OCI-LY7 (cell line): ENCODE measurements at regions of chr5 and their contacts with region 1.

Region 1: GRCh38 chr5:148730943-148731861 is 76.9 kb upstream of the HTR4 start:
- DNase-seq: peak; percentile 88
- H3K4me3 ChIP-seq: peak overlapping the region; percentile 28
- H3K27ac ChIP-seq: no peak overlapping the region
- H3K4me1 ChIP-seq: no peaks in the 10 kb centered on the region
- CTCF ChIP-seq: peak; percentile 100

Region 2: GRCh38 chr5:147949711-147950573 is 781.3 kb before region 1 on chr5:
- CTCF ChIA-PET with region 1: no interaction called
- POLR2A ChIA-PET with region 1: no interaction called
- intact Hi-C with region 1: loop called (anchors 2 kb)
- DNase-seq: peak; percentile 51
- H3K4me3 ChIP-seq: no peak overlapping the region
- H3K27ac ChIP-seq: no peak overlapping the region
- H3K4me1 ChIP-seq: no peaks in the 10 kb centered on the region
- CTCF ChIP-seq: peak; percentile 89

Region 3: GRCh38 chr5:148443998-148444397 is 287.2 kb before region 1 on chr5:
- CTCF ChIA-PET with region 1: no interaction called
- POLR2A ChIA-PET with region 1: no interaction called
- intact Hi-C with region 1: loop called (anchors 2 kb)
- DNase-seq: peak; percentile 63
- H3K4me3 ChIP-seq: no peak overlapping the region
- H3K27ac ChIP-seq: no peak overlapping the region
- H3K4me1 ChIP-seq: no peaks in the 10 kb centered on the region
- CTCF ChIP-seq: peak; percentile 91

Region 4: DNA sequence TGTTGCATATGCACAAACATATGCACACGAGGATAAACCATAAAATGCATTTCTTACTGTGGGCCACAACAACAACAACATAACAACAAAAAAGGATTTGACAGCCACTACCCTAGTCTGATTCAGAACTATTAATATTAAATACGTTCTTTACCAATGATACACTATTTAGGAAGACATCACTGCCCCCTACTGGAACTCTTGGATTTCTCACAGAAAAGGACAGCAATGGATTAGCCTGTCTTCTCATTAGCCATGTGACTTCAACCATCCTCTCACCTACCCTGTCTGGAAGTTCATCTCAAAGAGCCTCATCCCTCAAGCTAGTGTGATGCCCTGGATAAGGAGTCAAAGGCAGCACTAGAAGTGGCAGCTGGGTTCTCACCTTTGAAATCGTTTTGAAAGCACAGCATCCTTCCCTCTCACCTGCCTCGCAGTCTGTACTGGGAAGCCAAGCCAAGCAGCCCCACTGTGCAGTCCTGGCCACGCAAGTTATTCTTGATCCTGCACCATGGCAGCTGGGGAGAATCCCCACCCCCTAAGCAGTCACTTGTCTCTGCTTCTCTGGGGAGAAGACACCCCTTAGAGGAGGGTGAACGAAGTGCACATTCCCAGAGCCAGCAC is 267.1 kb after region 1 on chr5:
- CTCF ChIA-PET with region 1: interaction called, 4 read pairs
- POLR2A ChIA-PET with region 1: interaction called, 5 read pairs
- intact Hi-C with region 1: loop called (anchors 2 kb)
- DNase-seq: peak; percentile 65
- H3K4me3 ChIP-seq: no peak overlapping the region
- H3K27ac ChIP-seq: no peak overlapping the region
- H3K4me1 ChIP-seq: no peaks in the 10 kb centered on the region
- CTCF ChIP-seq: peak; percentile 86

Region 5: DNA sequence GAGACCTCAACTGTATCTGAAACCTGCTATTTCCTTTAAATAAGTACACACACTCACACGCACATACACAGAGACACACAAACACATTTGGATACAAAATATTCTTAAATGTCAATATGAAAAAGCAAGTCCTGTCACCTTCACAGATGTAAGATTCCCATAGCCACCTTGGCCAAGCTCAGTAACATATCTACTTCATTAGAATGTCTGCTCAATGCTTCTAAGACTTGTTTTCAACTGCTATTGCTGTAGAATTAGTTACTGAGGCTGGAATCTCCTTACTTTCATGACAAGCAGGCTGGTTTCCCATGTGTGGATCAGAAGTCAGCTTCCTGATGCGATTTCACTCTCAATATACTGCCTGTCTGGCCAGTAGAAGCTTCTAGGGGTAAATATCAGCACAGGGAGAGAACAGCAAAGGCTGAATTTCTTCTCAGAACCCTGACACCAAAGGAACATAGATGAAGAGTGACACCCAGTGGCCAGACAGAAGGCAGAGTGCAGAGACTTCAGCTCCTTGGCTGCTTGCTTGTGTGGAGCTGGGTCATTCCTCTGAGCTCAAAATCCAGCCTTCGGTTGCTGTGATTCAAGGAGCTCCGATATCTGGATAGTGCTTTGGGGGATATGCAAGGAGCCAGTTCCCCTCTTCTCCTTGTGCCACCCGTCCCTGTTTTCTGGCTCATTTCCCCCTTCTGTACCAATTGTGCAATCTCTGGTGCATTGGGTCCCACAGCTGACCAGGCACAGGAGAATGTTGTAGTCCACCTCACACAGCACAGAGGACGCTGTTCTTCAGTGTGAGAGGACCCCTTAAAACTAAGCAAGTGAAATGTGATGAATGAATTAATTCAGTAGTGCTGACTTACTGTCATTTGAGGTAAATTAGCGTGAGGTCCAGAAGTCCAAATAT is 383.5 kb after region 1 on chr5:
- CTCF ChIA-PET with region 1: interaction called, 3 read pairs
- POLR2A ChIA-PET with region 1: interaction called, 3 read pairs
- intact Hi-C with region 1: loop called (anchors 5 kb)
- DNase-seq: peak; percentile 54
- H3K4me3 ChIP-seq: no peak overlapping the region
- H3K27ac ChIP-seq: no peak overlapping the region
- H3K4me1 ChIP-seq: no peaks in the 10 kb centered on the region
- CTCF ChIP-seq: peak; percentile 78